T-cell (primary cell): ENCODE measurements at regions of chr19 and their contacts with region 1.

Region 1: DNA sequence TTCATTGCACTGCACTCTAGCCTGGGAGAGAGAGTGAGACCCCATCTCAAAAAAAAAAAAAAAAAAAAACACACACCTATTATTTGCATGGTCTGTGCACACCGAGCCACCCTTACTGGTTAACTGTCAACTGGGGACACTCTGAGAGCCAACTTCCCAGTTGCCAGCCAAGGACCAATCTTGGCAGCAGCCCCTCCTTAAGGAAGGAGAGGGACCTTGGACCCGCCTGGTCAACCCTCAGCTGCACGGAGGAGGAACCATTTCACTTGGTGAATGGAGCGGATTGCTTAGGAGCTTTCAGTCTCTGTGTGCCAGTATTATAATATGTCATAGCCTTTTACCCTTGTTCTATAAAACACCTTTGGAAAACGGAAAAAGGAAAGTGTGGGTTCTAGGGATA is 24.9 kb downstream of the MICOS13 start:
- DNase-seq: no peak
- ATAC-seq: no peak
- H3K4me3 ChIP-seq: no peak overlapping the region
- H3K4me3 Mint-ChIP-seq: no peak overlapping the region
- H3K27ac ChIP-seq: no peak overlapping the region
- H3K27ac Mint-ChIP-seq: no peak overlapping the region
- H3K4me1 ChIP-seq: no peaks in the 10 kb centered on the region
- H3K4me1 Mint-ChIP-seq: no peaks in the 10 kb centered on the region
- H3K27me3 ChIP-seq: no peaks in the 10 kb centered on the region
- H3K27me3 Mint-ChIP-seq: no peaks in the 10 kb centered on the region

Region 2: DNA sequence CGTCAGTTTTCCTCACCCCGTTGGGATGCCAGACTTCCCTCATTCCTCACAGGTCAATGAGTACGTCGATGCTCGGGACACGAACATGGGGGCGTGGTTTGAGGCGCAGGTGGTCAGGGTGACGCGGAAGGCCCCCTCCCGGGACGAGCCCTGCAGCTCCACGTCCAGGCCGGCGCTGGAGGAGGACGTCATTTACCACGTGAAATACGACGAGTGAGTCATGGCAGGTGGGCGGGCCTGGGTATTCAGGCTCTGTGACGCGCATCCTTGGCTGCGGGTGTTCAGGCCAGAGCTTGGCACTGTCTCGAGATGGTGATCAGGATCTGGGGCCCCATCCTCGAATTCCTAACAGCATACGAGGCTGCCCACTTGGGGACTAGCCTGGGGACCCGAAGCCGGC is 724.7 kb before region 1 on chr19:
- CTCF ChIA-PET with region 1: interaction called in 1 of 2 experiments, 15 read pairs
- POLR2A ChIA-PET with region 1: no interaction called
- DNase-seq: no peak
- ATAC-seq: no peak
- H3K4me3 ChIP-seq: no peak overlapping the region
- H3K4me3 Mint-ChIP-seq: no peak overlapping the region
- H3K27ac ChIP-seq: no peak overlapping the region
- H3K27ac Mint-ChIP-seq: no peak overlapping the region
- H3K4me1 ChIP-seq: no peaks in the 10 kb centered on the region
- H3K4me1 Mint-ChIP-seq: no peaks in the 10 kb centered on the region
- H3K27me3 ChIP-seq: no peaks in the 10 kb centered on the region
- H3K27me3 Mint-ChIP-seq: no peaks in the 10 kb centered on the region

Region 3: DNA sequence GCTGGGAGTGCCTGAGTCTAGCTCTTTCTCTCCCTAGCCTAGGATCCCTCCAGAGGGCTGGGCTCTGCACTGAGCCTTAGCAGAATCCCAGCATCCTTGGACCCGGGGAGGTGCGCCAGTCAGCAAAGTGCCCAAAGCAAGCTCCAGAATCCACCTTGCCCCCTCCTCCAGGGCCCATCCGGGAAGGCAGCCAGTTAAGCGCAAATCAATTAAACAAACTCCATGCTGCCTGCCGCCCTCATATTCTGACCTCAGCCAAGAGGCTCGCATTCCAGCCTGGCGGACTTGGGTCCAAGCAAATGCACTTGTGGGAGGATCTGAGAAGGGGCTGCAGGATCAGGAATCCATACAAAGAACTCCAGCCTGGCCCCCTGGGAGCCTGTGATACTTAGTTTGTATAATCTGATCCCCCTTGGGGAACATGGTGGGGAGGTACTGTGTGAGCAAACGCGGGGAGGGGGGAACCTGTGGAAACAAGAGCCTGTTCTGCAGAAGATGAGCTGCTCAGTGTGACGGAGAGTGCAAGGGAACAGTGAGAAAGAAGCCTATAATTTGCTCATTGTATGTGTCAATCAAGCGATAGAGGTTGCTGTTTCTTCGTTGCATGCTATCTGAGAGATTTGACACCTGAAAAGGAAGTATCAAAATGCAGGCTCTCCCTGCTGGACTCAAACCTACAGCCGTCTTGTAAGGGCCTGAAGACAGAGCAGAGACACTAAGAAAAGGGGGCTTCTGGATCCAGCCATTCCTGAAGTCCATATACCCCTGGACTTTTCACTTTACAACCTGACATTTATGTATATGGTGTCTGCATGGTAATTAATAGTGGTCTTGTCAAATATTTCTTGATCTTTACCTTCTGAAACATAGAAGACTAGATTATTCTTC is 170.8 kb before region 1 on chr19:
- CTCF ChIA-PET with region 1: no interaction called
- POLR2A ChIA-PET with region 1: no interaction called
- DNase-seq: no peak
- ATAC-seq: no peak
- H3K4me3 ChIP-seq: no peak overlapping the region
- H3K4me3 Mint-ChIP-seq: no peak overlapping the region
- H3K27ac ChIP-seq: no peak overlapping the region
- H3K27ac Mint-ChIP-seq: no peak overlapping the region
- H3K4me1 ChIP-seq: no peaks in the 10 kb centered on the region
- H3K4me1 Mint-ChIP-seq: no peaks in the 10 kb centered on the region
- H3K27me3 ChIP-seq: peaks cover 0 to 42% of the 10 kb centered on the region in 2 experiments
- H3K27me3 Mint-ChIP-seq: peaks cover 36 to 40% of the 10 kb centered on the region in 2 donors

Region 4: GRCh38 chr19:5645409-5645808 is 10.0 kb before region 1 on chr19:
- CTCF ChIA-PET with region 1: no interaction called
- POLR2A ChIA-PET with region 1: interaction called in 1 of 2 experiments, 13 read pairs
- DNase-seq: no peak
- ATAC-seq: no peak
- H3K4me3 ChIP-seq: no peak overlapping the region
- H3K4me3 Mint-ChIP-seq: no peak overlapping the region
- H3K27ac ChIP-seq: no peak overlapping the region
- H3K27ac Mint-ChIP-seq: no peak overlapping the region
- H3K4me1 ChIP-seq: no peaks in the 10 kb centered on the region
- H3K4me1 Mint-ChIP-seq: peaks cover 26 to 42% (median 29%) of the 10 kb centered on the region in 3 donors
- H3K27me3 ChIP-seq: no peaks in the 10 kb centered on the region
- H3K27me3 Mint-ChIP-seq: no peaks in the 10 kb centered on the region